ENCODE measurements at regions of chrX and their contacts with region 1.

Region 1: GRCh38 chrX:33336783-33337182 is 125.4 kb upstream of the DMD start:
- DNase-seq: no peak
- ATAC-seq: peak; percentile 56 to 82
- H3K4me3 ChIP-seq: peak overlapping the region in 2 of 4 donors; percentile 17 to 31
- H3K27ac ChIP-seq: no peak overlapping the region
- H3K4me1 ChIP-seq: no peaks in the 10 kb centered on the region
- H3K27me3 ChIP-seq: no peaks in the 10 kb centered on the region
- CTCF ChIP-seq: peak in 4 of 5 experiments; percentile 35 to 57 (median 40)
- POLR2A ChIP-seq: no peak

Region 2: GRCh38 chrX:32530802-32531403 is 805.9 kb before region 1 on chrX:
- in situ Hi-C with region 1: no loop called
- intact Hi-C with region 1: loop called (anchors 2 kb)
- DNase-seq: no peak
- ATAC-seq: no peak
- H3K4me3 ChIP-seq: peak overlapping the region in 1 of 4 donors; percentile 43
- H3K27ac ChIP-seq: no peak overlapping the region
- H3K4me1 ChIP-seq: no peaks in the 10 kb centered on the region
- H3K27me3 ChIP-seq: no peaks in the 10 kb centered on the region
- CTCF ChIP-seq: peak in 2 of 5 experiments; percentile 34 to 52
- POLR2A ChIP-seq: no peak

Region 3: DNA sequence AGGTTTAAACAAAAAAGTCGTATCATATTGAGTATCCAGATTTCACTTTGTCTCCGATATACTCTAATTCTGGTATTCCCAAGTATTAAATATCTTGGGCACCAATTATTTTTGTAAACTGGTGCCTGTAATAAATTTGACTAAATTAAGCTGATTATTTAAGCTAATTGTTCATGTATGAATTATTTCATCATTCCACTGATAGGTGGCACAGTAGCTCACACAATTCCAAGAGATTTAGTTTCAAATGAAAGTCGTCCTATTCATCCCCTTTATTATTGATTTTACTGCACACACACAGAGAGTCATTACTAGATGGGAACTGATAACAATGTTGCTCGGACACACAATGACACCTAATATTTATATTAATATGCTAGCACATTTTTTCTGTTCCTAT is 557.8 kb before region 1 on chrX:
- in situ Hi-C with region 1: no loop called
- intact Hi-C with region 1: loop called (anchors 10 kb)
- DNase-seq: no peak
- ATAC-seq: no peak
- H3K4me3 ChIP-seq: no peak overlapping the region
- H3K27ac ChIP-seq: no peak overlapping the region
- H3K4me1 ChIP-seq: no peaks in the 10 kb centered on the region
- H3K27me3 ChIP-seq: no peaks in the 10 kb centered on the region
- CTCF ChIP-seq: no peak
- POLR2A ChIP-seq: no peak

Region 4: DNA sequence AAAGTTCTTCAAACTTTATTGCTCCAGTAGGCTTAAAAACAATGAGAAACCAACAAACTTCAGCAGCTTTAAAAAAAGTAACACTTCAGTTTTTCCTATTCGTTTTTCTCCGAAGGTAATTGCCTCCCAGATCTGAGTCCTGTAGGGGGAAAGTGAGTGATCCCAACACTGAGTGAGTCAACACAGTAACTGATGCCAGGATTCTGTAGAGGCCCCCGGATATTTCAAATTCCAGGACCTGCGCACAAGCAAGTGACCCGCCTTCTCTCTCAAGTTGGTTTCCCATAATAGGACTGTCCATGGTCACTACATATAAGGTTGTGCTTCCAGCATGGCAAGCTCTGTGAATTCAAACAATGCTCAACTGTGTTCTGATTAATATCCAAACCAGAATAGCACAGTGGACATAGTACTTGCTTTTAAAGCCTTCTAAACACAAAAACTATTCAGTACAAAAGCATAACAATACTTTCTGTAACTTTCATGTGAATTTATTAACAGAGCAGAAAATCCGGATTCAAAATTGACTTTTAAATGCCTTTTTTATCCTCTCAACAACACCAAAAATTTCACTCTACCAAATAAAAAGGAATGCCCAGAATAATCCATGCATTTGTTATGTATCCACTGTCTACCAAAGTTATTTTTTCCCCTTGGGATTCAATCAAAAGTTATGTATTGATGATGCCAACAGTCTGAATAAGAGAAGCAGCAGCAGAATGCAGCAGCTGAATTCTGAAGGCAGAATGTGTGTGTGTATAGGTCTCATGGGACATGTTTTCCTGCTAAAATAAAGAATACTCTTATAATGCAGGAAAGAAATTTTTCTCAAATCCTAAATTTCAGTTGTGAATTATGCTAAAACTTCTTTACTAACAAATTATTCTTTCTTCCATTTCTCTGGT is 125.2 kb before region 1 on chrX and contains the start of gene DMD:
- in situ Hi-C with region 1: no loop called
- intact Hi-C with region 1: loop called (anchors 10 kb)
- DNase-seq: peak; percentile 49 to 76
- ATAC-seq: peak; percentile 90 to 92
- H3K4me3 ChIP-seq: peak within 1 kb of the TSS; percentile 51 to 61 (median 55)
- H3K27ac ChIP-seq: peak within 1 kb of the TSS; percentile 78 to 91 (median 84)
- H3K4me1 ChIP-seq: peaks cover 4 to 5% of the 10 kb centered on the region in 2 donors
- H3K27me3 ChIP-seq: no peaks in the 10 kb centered on the region
- CTCF ChIP-seq: peak in 1 of 5 experiments; percentile 29
- POLR2A ChIP-seq: peak; percentile 14 to 59
- total RNA-seq, gene DMD: 53.5 to 201 (median 98.9) TPM

Measured in gastrocnemius medialis (tissue), 4 donors.